AG04450 (cell line): ENCODE measurements at regions of chr3 and their contacts with region 1.

Region 1: GRCh38 chr3:11379233-11379823 is 107.1 kb downstream of the ATG7 start:
- DNase-seq: no peak
- H3K4me3 ChIP-seq: no peak overlapping the region
- H3K27ac ChIP-seq: no peak overlapping the region
- H3K27me3 ChIP-seq: no peaks in the 10 kb centered on the region
- CTCF ChIP-seq: peak; percentile 62

Region 2: DNA sequence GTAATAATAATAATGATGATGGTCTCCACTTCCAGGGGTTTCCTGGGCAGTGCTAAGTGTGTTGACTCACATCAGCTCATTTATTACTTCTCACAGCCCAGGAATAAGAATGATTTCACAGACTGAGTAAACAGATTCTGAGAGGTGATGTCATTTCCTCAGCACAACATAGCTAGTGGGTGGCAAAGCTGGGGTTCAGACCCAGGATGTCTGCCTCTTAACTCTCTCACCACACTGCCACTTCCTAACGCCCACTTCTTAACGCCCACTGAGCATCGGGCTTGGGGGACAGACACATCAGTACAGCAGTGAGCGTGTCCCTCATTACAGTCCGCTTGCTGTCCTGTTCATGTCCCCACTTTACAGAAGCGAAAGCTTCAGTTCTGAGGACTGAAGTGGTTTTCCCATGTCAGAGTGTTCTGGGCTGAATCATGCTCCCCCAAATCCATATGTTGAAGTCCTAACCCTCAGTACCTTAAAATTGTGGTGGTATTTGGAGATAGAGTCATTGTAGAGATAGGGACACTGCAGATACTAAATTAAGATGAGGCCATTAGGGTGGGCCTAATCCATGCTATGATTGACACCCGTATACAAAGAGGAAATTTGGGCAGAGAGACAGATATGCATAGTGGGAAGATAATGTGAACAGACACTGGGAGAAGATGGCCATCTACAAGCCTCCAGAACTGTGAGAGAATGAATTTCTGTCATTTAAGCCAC is 941.9 kb before region 1 on chr3:
- CTCF ChIA-PET with region 1: no interaction called
- POLR2A ChIA-PET with region 1: no interaction called
- DNase-seq: peak; percentile 29
- H3K4me3 ChIP-seq: no peak overlapping the region
- H3K27ac ChIP-seq: no peak overlapping the region
- H3K27me3 ChIP-seq: peaks cover 2% of the 10 kb centered on the region
- CTCF ChIP-seq: no peak

Region 3: GRCh38 chr3:11391174-11391879 is 12.0 kb after region 1 on chr3:
- CTCF ChIA-PET with region 1: interaction called, 17 read pairs
- POLR2A ChIA-PET with region 1: interaction called, 4 read pairs
- DNase-seq: no peak
- H3K4me3 ChIP-seq: no peak overlapping the region
- H3K27ac ChIP-seq: no peak overlapping the region
- H3K27me3 ChIP-seq: no peaks in the 10 kb centered on the region
- CTCF ChIP-seq: no peak

Region 4: DNA sequence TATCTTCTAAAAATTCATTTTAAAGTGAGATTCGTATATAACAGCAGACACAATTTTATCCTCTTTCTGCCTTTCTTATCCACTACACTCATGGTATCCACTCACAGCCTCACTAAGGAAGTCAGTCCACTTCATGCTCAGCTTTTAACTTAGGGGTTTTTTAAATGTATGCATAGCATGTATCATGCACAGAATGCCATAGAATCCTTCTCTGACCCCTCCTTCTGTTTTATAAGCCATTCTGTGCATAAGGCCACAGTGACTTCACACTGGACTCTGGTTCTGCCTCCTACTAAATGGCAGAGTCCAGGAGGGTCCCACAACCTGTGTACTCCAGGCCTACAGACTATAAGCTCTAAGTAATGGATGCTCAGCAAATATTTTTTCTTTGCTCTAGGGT is 22.1 kb after region 1 on chr3:
- CTCF ChIA-PET with region 1: no interaction called
- POLR2A ChIA-PET with region 1: no interaction called
- DNase-seq: no peak
- H3K4me3 ChIP-seq: no peak overlapping the region
- H3K27ac ChIP-seq: no peak overlapping the region
- H3K27me3 ChIP-seq: no peaks in the 10 kb centered on the region
- CTCF ChIP-seq: no peak

Region 5: DNA sequence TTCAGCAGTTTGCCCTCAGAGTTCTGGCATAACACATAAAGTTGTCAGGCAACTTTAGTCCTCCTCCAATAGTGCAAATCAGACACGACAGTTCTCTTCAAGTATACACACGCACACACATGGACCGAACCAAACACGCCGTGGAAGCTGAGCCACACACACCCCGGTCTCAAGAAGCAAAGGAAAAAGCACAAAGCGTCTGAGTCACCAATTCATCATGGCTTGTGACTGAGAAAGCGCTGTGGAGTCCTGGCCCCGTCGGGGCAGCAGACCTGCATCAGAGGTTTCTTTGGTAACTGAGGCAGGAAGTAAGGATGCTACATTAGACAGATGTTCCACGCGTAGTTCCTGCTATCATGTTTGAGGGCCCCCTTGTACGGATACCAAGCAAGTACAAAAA is 178.7 kb after region 1 on chr3:
- CTCF ChIA-PET with region 1: interaction called, 11 read pairs
- POLR2A ChIA-PET with region 1: no interaction called
- DNase-seq: no peak
- H3K4me3 ChIP-seq: no peak overlapping the region
- H3K27ac ChIP-seq: peak overlapping the region; percentile 78
- H3K27me3 ChIP-seq: no peaks in the 10 kb centered on the region
- CTCF ChIP-seq: no peak

Region 6: GRCh38 chr3:11651900-11652299 is 272.6 kb after region 1 on chr3:
- CTCF ChIA-PET with region 1: interaction called, 153 read pairs
- POLR2A ChIA-PET with region 1: interaction called, 4 read pairs
- DNase-seq: no peak
- H3K4me3 ChIP-seq: no peak overlapping the region
- H3K27ac ChIP-seq: no peak overlapping the region
- H3K27me3 ChIP-seq: no peaks in the 10 kb centered on the region
- CTCF ChIP-seq: peak; percentile 46

Region 7: GRCh38 chr3:11810276-11810675 is 430.9 kb after region 1 on chr3:
- CTCF ChIA-PET with region 1: interaction called, 13 read pairs
- POLR2A ChIA-PET with region 1: no interaction called
- DNase-seq: peak; percentile 79
- H3K4me3 ChIP-seq: no peak overlapping the region
- H3K27ac ChIP-seq: no peak overlapping the region
- H3K27me3 ChIP-seq: no peaks in the 10 kb centered on the region
- CTCF ChIP-seq: no peak